ENCODE measurements at regions of chr20 and their contacts with region 1.

Region 1: DNA sequence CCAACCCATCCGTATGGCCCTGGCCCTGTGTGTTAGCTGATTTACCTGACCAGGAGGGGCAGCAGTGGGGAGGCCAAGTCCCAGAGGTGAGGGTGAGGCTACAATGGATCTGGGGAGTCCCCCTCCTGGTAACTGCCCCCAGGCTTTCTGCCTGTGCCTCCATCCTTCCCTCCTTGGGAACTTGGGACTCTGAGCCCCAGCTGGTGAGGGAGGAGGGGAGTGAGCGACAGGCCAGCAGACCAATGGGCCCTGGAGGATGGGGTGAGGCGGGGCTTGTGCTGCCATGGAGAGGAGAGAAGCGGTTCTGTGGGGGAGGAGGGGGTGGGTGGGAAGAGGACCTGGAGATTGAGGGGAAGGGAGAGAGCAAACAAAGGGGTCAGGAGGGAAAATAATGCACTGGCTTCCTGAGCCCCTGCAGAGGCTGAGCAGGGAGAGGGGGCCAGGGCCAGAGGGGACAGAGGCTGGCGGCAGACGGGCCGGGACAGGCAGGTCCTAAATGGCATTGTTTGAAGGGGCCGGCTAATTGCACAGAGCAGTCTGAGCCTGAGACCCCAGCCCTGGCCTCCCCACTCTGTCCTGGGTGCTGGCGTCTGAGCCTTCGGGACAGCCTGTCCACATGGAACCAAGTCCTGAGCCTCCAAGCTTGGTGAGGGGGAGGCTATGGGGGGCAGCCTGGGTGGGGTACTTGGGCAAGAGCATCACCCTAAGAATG is 17.5 kb downstream of the DNMT3B start:
- DNase-seq: no peak
- H3K4me3 ChIP-seq: no peak overlapping the region
- H3K27ac ChIP-seq: no peak overlapping the region
- H3K4me1 ChIP-seq: peaks cover 4% of the 10 kb centered on the region
- H3K27me3 ChIP-seq: no peaks in the 10 kb centered on the region
- CTCF ChIP-seq: no peak

Region 2: GRCh38 chr20:32456869-32457478 is 322.7 kb before region 1 on chr20:
- CTCF ChIA-PET with region 1: interaction called, 12 read pairs
- POLR2A ChIA-PET with region 1: no interaction called
- intact Hi-C with region 1: no loop called
- DNase-seq: peak; percentile 68
- H3K4me3 ChIP-seq: peak overlapping the region; percentile 47
- H3K27ac ChIP-seq: no peak overlapping the region
- H3K4me1 ChIP-seq: no peaks in the 10 kb centered on the region
- H3K27me3 ChIP-seq: no peaks in the 10 kb centered on the region
- CTCF ChIP-seq: peak; percentile 91

Region 3: GRCh38 chr20:32484958-32485769 is 294.5 kb before region 1 on chr20:
- CTCF ChIA-PET with region 1: interaction called, 16 read pairs
- POLR2A ChIA-PET with region 1: no interaction called
- intact Hi-C with region 1: no loop called
- DNase-seq: peak; percentile 86
- H3K4me3 ChIP-seq: peak overlapping the region; percentile 67
- H3K27ac ChIP-seq: peak overlapping the region; percentile 7
- H3K4me1 ChIP-seq: no peaks in the 10 kb centered on the region
- H3K27me3 ChIP-seq: peaks cover 4% of the 10 kb centered on the region
- CTCF ChIP-seq: peak; percentile 85

Region 4: DNA sequence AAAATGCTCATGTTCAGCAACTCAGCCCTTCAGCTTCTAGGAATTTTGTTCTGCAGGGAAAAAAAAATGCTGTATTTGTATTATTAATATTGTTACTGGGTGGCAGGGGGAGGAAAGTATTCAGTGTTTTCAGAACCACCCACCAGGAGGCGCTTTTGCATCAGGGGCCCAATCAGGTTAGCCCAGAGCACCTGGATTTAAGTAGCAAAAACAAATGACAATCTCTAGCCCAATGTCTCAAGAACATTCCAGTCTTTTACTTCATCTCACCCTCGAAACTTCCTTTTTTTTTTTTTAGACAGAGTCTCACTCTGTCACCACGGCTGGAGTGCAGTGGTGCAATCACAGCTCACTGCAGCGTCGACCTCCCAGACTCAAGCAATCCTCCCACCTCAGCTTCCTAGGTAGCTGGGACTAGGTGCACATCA is 105.3 kb before region 1 on chr20:
- CTCF ChIA-PET with region 1: interaction called, 4 read pairs
- POLR2A ChIA-PET with region 1: no interaction called
- intact Hi-C with region 1: loop called (anchors 5 kb)
- DNase-seq: peak; percentile 27
- H3K4me3 ChIP-seq: no peak overlapping the region
- H3K27ac ChIP-seq: no peak overlapping the region
- H3K4me1 ChIP-seq: no peaks in the 10 kb centered on the region
- H3K27me3 ChIP-seq: no peaks in the 10 kb centered on the region
- CTCF ChIP-seq: peak; percentile 69

Region 5: DNA sequence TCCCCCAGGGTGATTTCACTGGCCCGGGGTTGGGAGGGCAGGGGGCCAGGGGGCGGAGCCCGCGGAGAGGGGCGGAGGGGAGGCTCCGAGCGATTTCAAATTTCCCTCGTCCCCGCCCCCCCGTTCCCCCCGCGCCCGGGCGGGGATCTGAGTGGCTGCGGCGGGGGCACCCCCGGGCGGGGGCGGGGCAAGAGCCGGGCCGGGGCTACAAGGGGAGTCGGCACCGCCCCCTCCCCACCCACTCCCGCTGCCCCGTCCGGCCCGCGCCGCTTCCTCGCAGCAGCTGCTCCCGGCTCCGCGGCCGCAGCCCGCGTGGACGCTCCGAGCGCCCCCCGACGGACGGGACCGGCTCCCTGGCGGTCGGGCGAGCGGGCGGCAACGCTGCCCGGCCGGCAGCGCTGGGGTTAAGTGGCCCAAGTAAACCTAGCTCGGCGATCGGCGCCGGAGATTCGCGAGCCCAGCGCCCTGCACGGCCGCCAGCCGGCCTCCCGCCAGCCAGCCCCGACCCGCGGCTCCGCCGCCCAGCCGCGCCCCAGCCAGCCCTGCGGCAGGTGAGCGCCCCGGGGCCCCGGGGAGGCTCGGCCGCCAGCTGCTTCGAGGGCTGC is 17.4 kb before region 1 on chr20 and contains the start of gene DNMT3B:
- CTCF ChIA-PET with region 1: interaction called, 5 read pairs
- POLR2A ChIA-PET with region 1: interaction called, 10 read pairs
- intact Hi-C with region 1: no loop called
- DNase-seq: peak; percentile 88
- H3K4me3 ChIP-seq: peak within 1 kb of the TSS; percentile 88
- H3K27ac ChIP-seq: peak within 1 kb of the TSS; percentile 63
- H3K4me1 ChIP-seq: peaks cover 13% of the 10 kb centered on the region
- H3K27me3 ChIP-seq: no peaks in the 10 kb centered on the region
- CTCF ChIP-seq: no peak
- total RNA-seq, gene DNMT3B: 3.8 and 5.7 TPM in 2 replicates